ENCODE measurements at regions of chr19 and their contacts with region 1.

Region 1: DNA sequence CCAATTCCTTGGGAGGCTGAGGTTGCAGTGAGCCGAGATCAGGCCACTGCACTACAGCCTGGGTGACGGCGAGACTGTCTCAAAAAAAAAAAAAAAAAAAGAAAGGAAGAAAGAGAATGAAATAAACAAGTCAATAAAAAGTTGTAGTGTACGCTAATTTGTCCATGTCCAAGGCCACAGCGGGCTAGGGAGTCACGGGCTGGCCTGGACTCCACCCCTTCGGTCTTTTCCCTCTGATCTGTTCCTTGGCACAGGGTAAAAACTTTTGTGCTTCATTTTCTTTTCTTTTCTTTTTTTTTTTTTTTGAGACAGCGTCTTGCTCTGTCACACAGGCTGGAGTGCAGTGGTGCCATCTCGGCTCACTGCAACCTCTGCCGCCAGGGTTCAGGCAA is 19.4 kb upstream of the MKNK2 start:
- DNase-seq: no peak
- H3K4me3 Mint-ChIP-seq: no peak overlapping the region
- H3K27ac Mint-ChIP-seq: no peak overlapping the region
- H3K4me1 Mint-ChIP-seq: peaks cover 33% of the 10 kb centered on the region
- H3K27me3 Mint-ChIP-seq: no peaks in the 10 kb centered on the region

Region 2: GRCh38 chr19:2050991-2051772 is 19.2 kb before region 1 on chr19 and contains the start of gene MKNK2:
- CTCF ChIA-PET with region 1: interaction called, 16 read pairs
- DNase-seq: peak; percentile 93
- H3K4me3 Mint-ChIP-seq: peak within 1 kb of the TSS; percentile 87
- H3K27ac Mint-ChIP-seq: peak within 1 kb of the TSS; percentile 95
- H3K4me1 Mint-ChIP-seq: peaks cover 66% of the 10 kb centered on the region
- H3K27me3 Mint-ChIP-seq: no peaks in the 10 kb centered on the region

Region 3: DNA sequence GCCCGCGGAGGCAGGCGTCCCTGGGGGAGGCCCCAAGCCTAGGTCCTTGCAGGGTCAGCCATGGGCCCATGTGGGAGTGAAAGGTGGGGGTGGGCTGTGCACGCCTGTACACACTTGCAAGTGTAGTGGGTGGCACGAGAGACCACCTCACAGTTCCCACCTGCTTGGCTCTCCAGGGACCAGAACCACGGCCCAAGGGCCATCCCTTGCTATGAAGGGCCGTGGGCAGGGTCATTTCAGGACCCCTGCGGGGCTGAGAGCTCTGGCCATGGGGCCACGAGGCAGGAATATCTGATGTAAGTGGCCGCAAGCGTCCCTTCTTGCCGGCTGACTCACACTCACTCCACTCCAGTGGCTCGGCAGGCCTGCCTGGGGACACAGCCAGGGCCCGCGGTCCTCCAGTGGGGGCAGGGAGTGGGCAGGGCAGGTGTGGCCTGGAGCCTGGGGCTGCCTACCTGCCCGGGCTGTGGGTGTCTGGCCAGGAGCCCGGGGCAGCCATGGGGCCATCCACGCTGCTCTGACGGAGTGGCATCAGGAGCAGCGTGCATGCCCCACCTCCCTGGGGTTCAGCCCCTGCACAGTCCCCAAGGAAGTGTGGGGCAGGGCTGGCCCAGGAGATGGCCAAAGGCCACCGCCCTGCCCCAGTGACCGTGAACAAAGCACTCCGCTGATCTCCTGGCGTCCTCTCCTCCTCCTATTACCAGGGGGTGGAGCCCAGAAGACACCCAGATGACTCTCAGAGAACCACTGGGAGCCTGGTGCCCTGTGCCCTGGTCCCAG is 10.8 kb before region 1 on chr19:
- CTCF ChIA-PET with region 1: interaction called, 14 read pairs
- DNase-seq: no peak
- H3K4me3 Mint-ChIP-seq: peak overlapping the region; percentile 80
- H3K27ac Mint-ChIP-seq: peak overlapping the region; percentile 95
- H3K4me1 Mint-ChIP-seq: peaks cover 61% of the 10 kb centered on the region
- H3K27me3 Mint-ChIP-seq: no peaks in the 10 kb centered on the region